ENCODE measurements at regions of chr2 and their contacts with region 1.

Region 1: GRCh38 chr2:190979906-190980629 is 33.9 kb downstream of the STAT1 start:
- DNase-seq: peak; percentile 76 to 90 (median 84)
- ATAC-seq: peak; percentile 94 to 96 (median 96)
- H3K4me3 ChIP-seq: peak overlapping the region in 7 of 12 donors; percentile 2 to 24 (median 11)
- H3K27ac ChIP-seq: peak overlapping the region; percentile 53 to 85 (median 73)
- H3K4me1 ChIP-seq: peaks cover 4 to 76% (median 22%) of the 10 kb centered on the region in 12 donors
- H3K27me3 ChIP-seq: no peaks in the 10 kb centered on the region
- CTCF ChIP-seq: peak in 1 of 12 donors; percentile 8
- POLR2A ChIP-seq: no peak

Region 2: DNA sequence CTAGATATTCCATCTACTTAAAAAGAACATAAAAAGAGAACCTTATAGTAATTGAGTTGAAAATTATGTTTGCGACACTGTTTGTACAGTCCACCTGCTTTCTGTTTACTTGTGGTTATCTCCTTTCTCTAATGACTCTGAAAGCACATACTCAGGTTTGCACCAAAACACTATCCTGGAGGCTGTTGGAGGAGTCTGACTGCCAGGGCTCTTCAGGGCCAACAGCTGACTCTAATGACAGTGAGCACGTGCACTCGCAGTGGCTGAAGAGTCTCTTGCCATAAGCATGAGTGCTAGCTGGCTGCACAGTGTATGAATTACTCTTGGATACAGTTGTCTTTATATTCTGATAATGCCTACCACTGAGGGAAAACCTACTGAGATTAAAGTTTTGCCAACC is 116.1 kb before region 1 on chr2:
- intact Hi-C with region 1: loop called in 2 of 10 experiments (anchors 5 to 10 kb)
- DNase-seq: peak in 1 of 5 donors; percentile 42
- ATAC-seq: peak; percentile 56 to 90 (median 74)
- H3K4me3 ChIP-seq: no peak overlapping the region
- H3K27ac ChIP-seq: no peak overlapping the region
- H3K4me1 ChIP-seq: peaks cover 0 to 25% (median 8%) of the 10 kb centered on the region in 12 donors
- H3K27me3 ChIP-seq: no peaks in the 10 kb centered on the region
- CTCF ChIP-seq: no peak
- POLR2A ChIP-seq: no peak

Region 3: DNA sequence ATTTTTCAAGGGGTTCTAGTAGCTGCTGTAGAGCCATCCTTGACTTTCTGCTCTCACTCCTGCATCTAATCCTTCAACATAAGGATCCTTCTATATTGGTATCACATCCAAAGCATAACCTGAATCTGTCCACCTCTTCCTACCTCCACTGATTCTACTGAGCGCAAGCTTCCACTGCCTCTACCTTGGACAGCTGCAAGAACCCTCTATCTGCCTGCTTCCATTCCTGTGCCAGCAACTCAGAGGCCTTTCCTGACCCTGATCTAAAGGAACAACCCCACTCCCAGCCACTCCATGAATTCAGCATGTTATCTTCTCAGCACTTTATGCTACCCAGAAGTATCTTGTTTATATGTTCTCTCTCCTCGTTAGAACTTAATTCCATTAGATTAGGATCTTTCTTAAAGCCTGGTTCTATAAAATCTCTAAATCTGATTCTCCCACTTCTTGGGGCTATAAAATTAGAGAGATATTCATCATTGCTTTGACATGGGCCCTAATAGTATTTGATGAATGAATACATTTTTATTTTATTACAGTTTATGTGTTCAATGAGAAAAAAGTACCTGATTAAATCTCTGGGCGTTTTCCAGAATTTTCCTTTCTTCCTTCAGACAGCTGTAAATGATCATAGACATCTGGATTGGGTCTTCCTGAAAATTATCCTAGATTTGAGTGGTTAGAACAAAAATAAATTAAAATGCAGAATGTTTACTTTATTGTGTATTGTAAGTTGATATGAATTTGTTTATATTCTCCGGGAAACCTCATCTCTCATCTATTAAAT is 27.1 kb after region 1 on chr2:
- intact Hi-C with region 1: loop called in 1 of 10 experiments (anchors 2 kb)
- DNase-seq: no peak
- ATAC-seq: no peak
- H3K4me3 ChIP-seq: no peak overlapping the region
- H3K27ac ChIP-seq: no peak overlapping the region
- H3K4me1 ChIP-seq: peaks cover 0 to 83% (median 14%) of the 10 kb centered on the region in 12 donors
- H3K27me3 ChIP-seq: no peaks in the 10 kb centered on the region
- CTCF ChIP-seq: no peak
- POLR2A ChIP-seq: no peak